AG04449 (cell line): ENCODE measurements at regions of chr11 and their contacts with region 1.

Region 1: DNA sequence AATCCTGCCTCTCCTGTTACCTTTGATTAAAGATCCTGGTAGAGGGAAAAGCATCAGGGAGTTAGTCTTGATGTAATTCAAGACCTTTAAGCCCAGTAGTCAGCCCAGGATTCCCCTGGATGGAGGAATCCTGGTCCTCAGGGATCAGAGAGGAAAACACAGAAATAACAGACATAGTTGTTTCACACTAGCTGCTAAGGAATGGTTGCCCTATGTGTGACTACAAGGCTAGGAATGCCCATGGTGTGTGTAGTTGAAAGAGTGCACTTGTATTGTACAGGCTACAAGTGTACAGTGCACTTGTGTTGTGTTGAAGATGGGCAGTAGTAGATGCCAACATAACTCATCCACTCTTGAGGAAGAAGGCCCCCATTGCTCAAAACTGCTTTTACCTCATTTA is 226.8 kb downstream of the AASDHPPT start:
- DNase-seq: peak; percentile 46
- H3K4me3 ChIP-seq: no peak overlapping the region
- CTCF ChIP-seq: no peak

Region 2: DNA sequence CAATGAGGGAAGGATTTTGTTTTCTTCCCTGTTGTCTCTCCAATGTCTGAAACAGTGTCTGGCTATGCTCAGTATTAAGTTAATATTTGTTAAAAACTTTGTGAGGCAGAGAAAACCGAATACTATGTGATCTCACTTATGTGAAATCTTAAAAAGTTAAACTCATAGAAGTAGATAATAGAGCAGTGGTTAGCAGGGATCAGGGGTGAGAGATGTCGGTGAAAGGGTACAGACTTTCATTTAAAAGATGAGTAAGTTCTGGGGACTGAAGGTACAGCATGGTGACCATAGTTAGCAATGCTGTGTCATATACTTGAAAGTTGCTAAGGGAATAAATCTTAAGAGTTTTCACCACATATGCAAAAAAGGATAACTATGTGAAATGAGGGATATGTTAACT is 17.8 kb after region 1 on chr11:
- CTCF ChIA-PET with region 1: interaction called, 11 read pairs
- POLR2A ChIA-PET with region 1: no interaction called
- DNase-seq: no peak
- H3K4me3 ChIP-seq: no peak overlapping the region
- CTCF ChIP-seq: no peak

Region 3: GRCh38 chr11:106333678-106334077 is 29.4 kb after region 1 on chr11:
- CTCF ChIA-PET with region 1: no interaction called
- POLR2A ChIA-PET with region 1: no interaction called
- DNase-seq: no peak
- H3K4me3 ChIP-seq: no peak overlapping the region
- CTCF ChIP-seq: no peak